IMR-90 (cell line): ENCODE measurements at regions of chr7 and their contacts with region 1.

Region 1: DNA sequence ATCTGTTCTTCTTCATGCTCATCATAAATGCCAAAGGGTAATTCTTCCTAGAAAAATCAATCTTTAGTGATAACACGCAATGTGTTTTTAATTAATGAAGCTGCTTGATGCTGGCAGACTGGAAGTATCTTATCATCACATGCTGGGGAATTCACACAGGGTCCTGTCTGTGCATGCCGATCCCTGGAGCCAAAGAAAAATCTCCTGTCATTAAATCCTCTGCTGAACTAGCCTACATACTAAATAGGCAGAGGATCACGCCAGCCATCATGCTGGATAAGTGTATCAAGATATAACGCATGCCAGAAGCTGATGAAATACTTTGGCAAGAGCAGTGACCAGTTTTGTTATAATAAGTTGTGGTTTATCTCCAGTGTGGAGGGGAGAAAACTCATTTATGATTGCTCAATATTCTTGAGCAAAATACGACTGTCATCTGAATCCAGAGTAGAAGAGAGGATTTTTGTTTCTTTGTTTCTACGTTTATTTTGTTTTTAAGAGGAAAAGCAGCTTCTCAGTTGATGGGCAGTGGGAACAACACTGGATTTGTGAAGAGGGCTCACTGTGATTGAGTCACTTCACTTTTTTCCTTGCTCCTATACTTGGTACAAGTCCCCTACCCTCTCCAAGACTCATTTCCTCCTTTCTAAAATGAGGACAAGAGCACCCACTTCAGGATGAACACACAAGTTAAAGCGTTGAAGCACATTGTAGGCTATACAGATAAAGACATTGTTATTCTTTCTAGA is 649.1 kb downstream of the TNS3 start:
- DNase-seq: peak; percentile 96
- ATAC-seq: peak; percentile 75
- H3K4me3 ChIP-seq: no peak overlapping the region
- H3K27ac ChIP-seq: peak overlapping the region; percentile 80; the same call in 1 of the 2 replicates
- H3K4me1 ChIP-seq: peaks cover 14% of the 10 kb centered on the region
- H3K27me3 ChIP-seq: no peaks in the 10 kb centered on the region
- CTCF ChIP-seq: peak; percentile 38
- POLR2A ChIP-seq: no peak
- RAD21 ChIP-seq: peak; percentile 50

Region 2: DNA sequence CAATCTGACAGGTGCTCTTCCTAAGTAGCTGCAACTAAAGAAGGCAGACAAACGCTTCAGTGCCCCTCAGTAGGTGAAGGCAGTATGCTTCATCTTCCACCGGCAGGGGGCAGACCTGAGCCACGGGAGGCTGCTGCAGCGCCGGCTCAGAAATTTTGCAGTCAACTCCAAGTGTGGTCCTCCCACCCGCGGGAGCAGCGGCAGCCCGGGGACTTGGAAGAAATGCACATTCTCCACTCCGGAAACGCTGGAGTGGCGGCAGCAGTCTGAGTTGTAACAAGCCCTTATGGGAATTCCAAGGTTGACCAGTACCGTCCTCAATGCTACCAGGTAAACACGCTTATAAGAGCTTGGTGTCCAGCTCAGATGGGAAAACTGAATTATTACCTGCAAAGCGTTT is 1015.2 kb before region 1 on chr7:
- CTCF ChIA-PET with region 1: interaction called, 5 read pairs
- POLR2A ChIA-PET with region 1: no interaction called
- dilution Hi-C with region 1: no loop called
- in situ Hi-C with region 1: loop called (anchors 25 kb)
- intact Hi-C with region 1: loop called (anchors 2 kb)
- DNase-seq: peak; percentile 64
- ATAC-seq: peak; percentile 53
- H3K4me3 ChIP-seq: peak overlapping the region; percentile 34
- H3K27ac ChIP-seq: no peak overlapping the region
- H3K4me1 ChIP-seq: peaks cover 9% of the 10 kb centered on the region
- H3K27me3 ChIP-seq: no peaks in the 10 kb centered on the region
- CTCF ChIP-seq: peak; percentile 90
- POLR2A ChIP-seq: 0 out of 2 replicates have a peak, but pooled peaks have one; percentile 40
- RAD21 ChIP-seq: peak; percentile 83

Region 3: GRCh38 chr7:46369933-46370654 is 562.8 kb before region 1 on chr7:
- CTCF ChIA-PET with region 1: no interaction called
- POLR2A ChIA-PET with region 1: no interaction called
- dilution Hi-C with region 1: no loop called
- in situ Hi-C with region 1: no loop called
- intact Hi-C with region 1: loop called (anchors 10 kb)
- DNase-seq: peak; percentile 91
- ATAC-seq: peak; percentile 75
- H3K4me3 ChIP-seq: no peak overlapping the region
- H3K27ac ChIP-seq: peak overlapping the region; percentile 83; the same call in 1 of the 2 replicates
- H3K4me1 ChIP-seq: peaks cover 3% of the 10 kb centered on the region
- H3K27me3 ChIP-seq: no peaks in the 10 kb centered on the region
- CTCF ChIP-seq: no peak
- POLR2A ChIP-seq: no peak
- RAD21 ChIP-seq: no peak

Region 4: GRCh38 chr7:46385662-46386309 is 547.1 kb before region 1 on chr7:
- CTCF ChIA-PET with region 1: no interaction called
- POLR2A ChIA-PET with region 1: no interaction called
- dilution Hi-C with region 1: no loop called
- in situ Hi-C with region 1: loop called (anchors 10 kb)
- intact Hi-C with region 1: no loop called
- DNase-seq: peak; percentile 96
- ATAC-seq: peak; percentile 92
- H3K4me3 ChIP-seq: no peak overlapping the region
- H3K27ac ChIP-seq: no peak overlapping the region; the same call in 1 of the 2 replicates
- H3K4me1 ChIP-seq: peaks cover 10% of the 10 kb centered on the region; the same call in 1 of the 2 replicates
- H3K27me3 ChIP-seq: no peaks in the 10 kb centered on the region
- CTCF ChIP-seq: no peak
- POLR2A ChIP-seq: no peak
- RAD21 ChIP-seq: no peak; the same call in 1 of the 2 replicates

Region 5: GRCh38 chr7:46776790-46777189 is 156.1 kb before region 1 on chr7:
- CTCF ChIA-PET with region 1: no interaction called
- POLR2A ChIA-PET with region 1: no interaction called
- dilution Hi-C with region 1: no loop called
- in situ Hi-C with region 1: no loop called
- intact Hi-C with region 1: loop called (anchors 5 kb)
- DNase-seq: peak; percentile 36
- ATAC-seq: no peak
- H3K4me3 ChIP-seq: no peak overlapping the region
- H3K27ac ChIP-seq: no peak overlapping the region
- H3K4me1 ChIP-seq: no peaks in the 10 kb centered on the region
- H3K27me3 ChIP-seq: no peaks in the 10 kb centered on the region
- CTCF ChIP-seq: peak; percentile 55
- POLR2A ChIP-seq: no peak
- RAD21 ChIP-seq: peak; percentile 67